GM12878 (cell line): ENCODE measurements at regions of chr20 and their contacts with region 1.

Region 1: DNA sequence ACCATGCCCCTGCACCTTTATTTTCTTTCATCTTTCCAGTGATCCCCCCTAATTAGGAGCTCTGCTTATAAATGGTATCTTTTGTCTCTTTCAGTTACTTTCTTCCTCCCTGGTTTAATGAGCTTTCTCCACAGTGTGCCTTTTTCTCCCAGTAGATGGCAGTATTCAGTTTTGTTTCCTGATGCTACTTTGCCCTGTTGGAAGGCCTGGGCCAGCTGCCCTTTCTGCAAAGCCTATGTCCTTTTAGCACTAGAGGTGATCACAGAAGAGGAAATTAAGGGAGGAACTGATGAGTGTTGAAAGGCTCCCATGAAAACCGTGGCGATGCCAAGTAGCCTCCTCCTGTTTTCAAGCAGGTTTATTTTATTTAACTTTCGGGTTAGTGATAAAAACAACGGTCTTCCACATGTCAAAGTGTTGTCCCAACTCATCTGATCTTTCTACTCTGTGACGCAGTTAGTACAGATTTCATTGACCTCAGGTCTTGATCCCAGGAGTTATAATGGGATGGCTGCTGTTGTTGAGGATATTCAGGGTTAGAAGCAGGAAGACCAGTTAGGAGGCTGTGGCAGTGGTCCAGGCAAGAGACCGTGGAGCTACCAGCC is 184.2 kb upstream of the BMP2 start:
- DNase-seq: peak; percentile 25
- ATAC-seq: peak; percentile 96
- H3K4me3 ChIP-seq: no peak overlapping the region
- H3K27ac ChIP-seq: no peak overlapping the region
- H3K4me1 ChIP-seq: no peaks in the 10 kb centered on the region
- H3K27me3 ChIP-seq: no peaks in the 10 kb centered on the region
- CTCF ChIP-seq: peak; percentile 58 to 81 (median 63)
- EP300 ChIP-seq: no peak
- POLR2A ChIP-seq: no peak
- RAD21 ChIP-seq: peak; percentile 63

Region 2: GRCh38 chr20:6595704-6596103 is 12.5 kb after region 1 on chr20:
- CTCF ChIA-PET with region 1: interaction called, 31 read pairs
- POLR2A ChIA-PET with region 1: interaction called, 6 read pairs
- RAD21 ChIA-PET with region 1: interaction called, 10 read pairs
- SMC1A ChIA-PET with region 1: interaction called, 7 read pairs
- in situ Hi-C with region 1: no loop called
- intact Hi-C with region 1: no loop called
- DNase-seq: no peak
- ATAC-seq: no peak
- H3K4me3 ChIP-seq: no peak overlapping the region
- H3K27ac ChIP-seq: no peak overlapping the region
- H3K4me1 ChIP-seq: no peaks in the 10 kb centered on the region
- H3K27me3 ChIP-seq: no peaks in the 10 kb centered on the region
- CTCF ChIP-seq: no peak
- EP300 ChIP-seq: no peak
- POLR2A ChIP-seq: no peak
- RAD21 ChIP-seq: no peak

Region 3: GRCh38 chr20:6636209-6637159 is 53.2 kb after region 1 on chr20:
- CTCF ChIA-PET with region 1: interaction called, 38 read pairs
- POLR2A ChIA-PET with region 1: no interaction called
- RAD21 ChIA-PET with region 1: interaction called, 15 read pairs
- SMC1A ChIA-PET with region 1: interaction called, 109 read pairs
- in situ Hi-C with region 1: no loop called
- intact Hi-C with region 1: no loop called
- DNase-seq: no peak
- ATAC-seq: peak; percentile 73
- H3K4me3 ChIP-seq: no peak overlapping the region
- H3K27ac ChIP-seq: no peak overlapping the region
- H3K4me1 ChIP-seq: no peaks in the 10 kb centered on the region
- H3K27me3 ChIP-seq: no peaks in the 10 kb centered on the region
- CTCF ChIP-seq: peak; percentile 24 to 54 (median 25); a peak in 3 of 6 replicates
- EP300 ChIP-seq: no peak
- POLR2A ChIP-seq: no peak
- RAD21 ChIP-seq: peak; percentile 36

Region 4: DNA sequence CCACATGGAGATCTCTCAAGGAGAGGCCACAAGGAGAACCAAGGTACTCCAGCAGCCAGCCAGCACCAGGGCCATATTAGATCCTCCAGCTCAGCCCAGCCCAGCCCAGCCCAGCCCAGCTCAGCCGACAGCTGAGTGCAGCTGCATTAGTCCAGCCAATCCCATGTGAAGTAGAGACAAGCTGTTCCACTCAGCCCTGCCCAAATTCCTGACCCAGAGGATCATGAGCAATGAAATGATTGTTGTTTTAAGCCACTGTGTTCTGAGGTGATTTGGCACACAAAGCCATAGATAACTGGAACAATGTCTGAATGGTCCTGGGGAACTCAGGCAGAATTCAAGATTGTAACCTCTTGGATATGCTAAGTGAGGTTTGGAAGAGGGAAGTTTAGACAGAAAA is 124.8 kb after region 1 on chr20:
- CTCF ChIA-PET with region 1: interaction called, 7 read pairs
- POLR2A ChIA-PET with region 1: no interaction called
- RAD21 ChIA-PET with region 1: interaction called, 5 read pairs
- SMC1A ChIA-PET with region 1: interaction called, 4 read pairs
- in situ Hi-C with region 1: no loop called
- intact Hi-C with region 1: loop called (anchors 5 kb)
- DNase-seq: no peak
- ATAC-seq: peak; percentile 8; the same call in 2 of the 3 replicates
- H3K4me3 ChIP-seq: no peak overlapping the region
- H3K27ac ChIP-seq: no peak overlapping the region
- H3K4me1 ChIP-seq: no peaks in the 10 kb centered on the region
- H3K27me3 ChIP-seq: no peaks in the 10 kb centered on the region
- CTCF ChIP-seq: no peak
- EP300 ChIP-seq: no peak
- POLR2A ChIP-seq: no peak
- RAD21 ChIP-seq: no peak

Region 5: DNA sequence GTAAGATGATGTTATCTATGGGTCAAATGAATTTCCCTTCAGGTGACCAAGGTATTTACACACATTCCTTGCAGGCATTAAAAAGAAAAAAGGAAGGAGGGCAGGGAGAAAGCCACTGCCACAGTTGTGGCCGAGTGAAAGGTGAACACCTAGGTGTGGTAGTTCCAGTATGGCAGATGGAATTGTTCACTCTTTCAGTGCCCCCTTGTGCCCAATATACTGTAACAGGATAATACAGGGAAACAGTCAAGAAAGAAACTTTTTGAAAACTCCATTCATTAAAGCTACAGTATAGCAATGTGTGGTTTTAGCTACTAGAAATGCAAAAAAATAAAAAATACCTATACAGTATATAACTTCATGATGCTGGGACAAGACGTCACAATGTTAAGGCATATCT is 236.4 kb after region 1 on chr20:
- CTCF ChIA-PET with region 1: interaction called, 7 read pairs
- POLR2A ChIA-PET with region 1: no interaction called
- RAD21 ChIA-PET with region 1: interaction called, 3 read pairs
- SMC1A ChIA-PET with region 1: interaction called, 5 read pairs
- in situ Hi-C with region 1: no loop called
- intact Hi-C with region 1: loop called (anchors 1 kb)
- DNase-seq: no peak
- ATAC-seq: peak; percentile 84
- H3K4me3 ChIP-seq: no peak overlapping the region
- H3K27ac ChIP-seq: no peak overlapping the region
- H3K4me1 ChIP-seq: no peaks in the 10 kb centered on the region
- H3K27me3 ChIP-seq: no peaks in the 10 kb centered on the region
- CTCF ChIP-seq: no peak; a peak in 1 of 6 replicates
- EP300 ChIP-seq: no peak
- POLR2A ChIP-seq: no peak
- RAD21 ChIP-seq: no peak

Region 6: DNA sequence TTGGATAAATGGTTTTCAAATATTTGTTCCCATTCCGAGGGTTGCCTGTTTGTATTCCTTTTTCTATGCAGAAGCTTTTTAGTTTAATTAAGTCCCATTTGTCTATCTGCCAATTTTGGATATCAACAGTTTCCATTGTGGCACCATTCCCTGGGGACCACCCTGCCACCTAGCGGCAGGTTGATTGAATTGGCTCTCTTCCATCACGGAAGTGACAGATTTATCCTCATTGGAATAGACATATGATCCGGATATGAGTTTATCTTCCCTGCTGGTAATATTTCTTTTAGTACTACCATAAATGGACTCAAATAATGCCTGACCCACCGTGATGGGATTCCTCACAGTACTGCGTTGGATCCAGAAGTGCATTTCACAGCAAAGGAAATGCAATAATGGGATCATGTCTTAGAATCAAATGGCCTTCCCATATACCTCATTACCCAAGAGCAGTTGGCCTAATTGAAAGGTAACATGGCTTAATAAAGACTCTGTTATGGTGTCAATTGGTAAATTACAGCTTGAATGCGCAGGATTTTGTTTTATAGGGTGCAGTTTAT is 511.3 kb after region 1 on chr20:
- CTCF ChIA-PET with region 1: no interaction called
- POLR2A ChIA-PET with region 1: no interaction called
- RAD21 ChIA-PET with region 1: no interaction called
- SMC1A ChIA-PET with region 1: no interaction called
- in situ Hi-C with region 1: no loop called
- intact Hi-C with region 1: loop called (anchors 2 kb)
- DNase-seq: no peak
- ATAC-seq: peak; percentile 43; the same call in 1 of the 3 replicates
- H3K4me3 ChIP-seq: no peak overlapping the region
- H3K27ac ChIP-seq: no peak overlapping the region
- H3K4me1 ChIP-seq: no peaks in the 10 kb centered on the region
- H3K27me3 ChIP-seq: no peaks in the 10 kb centered on the region
- CTCF ChIP-seq: peak; percentile 45 to 75 (median 62)
- EP300 ChIP-seq: no peak
- POLR2A ChIP-seq: no peak
- RAD21 ChIP-seq: peak; percentile 43

Region 7: DNA sequence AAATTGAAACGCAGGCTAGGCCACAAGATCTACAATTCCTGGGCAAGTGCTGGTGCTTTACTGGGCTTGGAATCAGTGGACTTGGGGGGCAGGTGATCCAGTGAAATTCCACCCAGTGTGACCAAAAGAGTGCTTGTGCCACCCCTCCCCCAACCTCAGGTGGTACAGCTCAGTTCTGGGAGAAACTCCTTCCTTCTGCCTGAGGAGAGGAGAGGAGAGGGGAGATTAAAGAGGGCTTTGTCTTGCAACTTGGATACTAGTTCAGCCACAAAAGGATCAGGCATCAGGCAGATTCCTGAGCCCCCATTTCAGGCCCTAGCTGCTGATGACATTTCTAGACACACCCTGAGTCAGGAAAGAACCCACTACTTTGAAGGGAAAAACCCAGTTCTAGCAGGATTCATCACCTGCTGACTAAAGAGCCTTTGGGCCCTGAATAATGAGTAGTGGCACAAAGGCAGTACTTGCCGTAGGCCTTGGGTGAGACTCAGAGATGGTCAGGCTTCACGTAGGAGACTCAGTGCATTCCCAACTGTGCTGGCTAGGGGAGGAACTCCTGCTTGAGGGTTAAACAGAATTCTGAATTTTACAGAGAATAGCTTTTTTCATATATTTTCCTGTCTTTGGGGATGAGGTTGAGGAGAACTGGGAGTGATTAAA is 631.0 kb after region 1 on chr20:
- CTCF ChIA-PET with region 1: no interaction called
- POLR2A ChIA-PET with region 1: no interaction called
- RAD21 ChIA-PET with region 1: no interaction called
- SMC1A ChIA-PET with region 1: no interaction called
- in situ Hi-C with region 1: no loop called
- intact Hi-C with region 1: no loop called
- DNase-seq: no peak
- ATAC-seq: no peak; the same call in 2 of the 3 replicates
- H3K4me3 ChIP-seq: no peak overlapping the region
- H3K27ac ChIP-seq: no peak overlapping the region
- H3K4me1 ChIP-seq: no peaks in the 10 kb centered on the region
- H3K27me3 ChIP-seq: no peaks in the 10 kb centered on the region
- CTCF ChIP-seq: no peak
- EP300 ChIP-seq: no peak
- POLR2A ChIP-seq: no peak
- RAD21 ChIP-seq: no peak